Activated T-helper 2 cell treated with anti-CD3 and anti-CD28 coated beads, Interferon-gamma antibody, Interleukin-2, Interleukin-4, amounts not matched to agents 10 μg/mL and 5 μg/mL and 100 μg/mL, durations not matched to agents 14 hours and 24 hours and 36 hours (primary cell): ENCODE measurements at regions of chr2 and their contacts with region 1.

Region 1: DNA sequence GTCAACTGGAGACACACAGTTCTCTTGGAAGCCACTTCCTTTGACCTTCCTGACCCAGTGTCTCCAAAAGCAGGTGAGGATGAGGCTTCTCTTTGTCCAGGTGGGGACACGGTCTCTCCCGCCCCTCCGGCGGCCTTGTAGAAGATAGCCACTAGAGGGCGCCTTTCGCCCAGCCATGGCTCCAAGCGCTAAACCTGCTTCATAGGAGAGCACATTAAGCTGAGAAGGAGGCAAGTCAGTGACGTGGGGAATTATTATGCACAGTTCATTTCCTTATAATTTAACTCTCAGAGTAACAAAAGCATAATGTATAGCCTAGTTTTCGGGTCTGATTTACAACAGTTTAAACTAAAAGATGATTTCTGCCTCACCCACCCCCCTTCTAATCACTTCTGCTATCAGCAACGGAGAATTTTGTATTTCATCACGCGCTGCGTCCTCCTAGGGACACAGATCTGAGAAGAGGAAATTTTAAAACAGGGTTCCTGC is 208.7 kb downstream of the ICOS start:
- DNase-seq: peak; percentile 69
- H3K4me3 Mint-ChIP-seq: peak overlapping the region; percentile 76
- H3K27ac Mint-ChIP-seq: peak overlapping the region; percentile 75
- H3K4me1 Mint-ChIP-seq: peaks cover 19% of the 10 kb centered on the region
- H3K27me3 Mint-ChIP-seq: peaks cover 30% of the 10 kb centered on the region

Region 2: DNA sequence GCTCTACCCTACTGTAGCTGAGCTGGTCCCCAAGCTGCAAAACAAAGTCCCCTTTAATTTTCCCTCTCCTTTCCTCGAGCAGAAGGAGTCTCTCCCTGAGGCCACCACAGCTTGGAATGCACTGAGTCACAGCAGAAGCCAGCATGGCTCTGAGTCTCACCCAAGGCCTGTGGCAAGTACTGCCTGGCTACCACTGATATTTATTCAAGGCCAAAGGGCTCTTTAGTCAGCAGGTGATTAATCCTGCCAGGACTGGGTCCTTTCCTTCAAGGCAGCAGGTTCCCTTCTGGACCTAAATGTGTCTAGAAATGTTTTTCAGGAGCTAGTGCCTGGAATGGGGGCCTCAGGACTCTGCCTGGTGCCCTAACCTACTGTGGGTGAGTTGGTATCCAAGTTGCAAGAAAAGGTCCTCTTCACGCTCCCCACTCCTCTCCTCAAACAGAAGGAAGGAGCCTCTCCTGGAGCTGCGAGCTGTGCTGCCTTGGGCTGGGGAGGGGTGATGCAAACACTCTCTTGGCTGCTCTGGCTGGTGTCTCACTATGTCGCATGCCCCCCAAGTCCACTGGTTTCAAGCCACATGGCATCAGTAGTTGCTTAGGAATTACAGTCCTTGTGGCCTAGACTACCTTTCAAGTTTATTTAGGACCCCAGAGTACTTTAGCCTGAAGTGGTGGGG is 385.5 kb before region 1 on chr2:
- intact Hi-C with region 1: no loop called
- DNase-seq: no peak
- H3K4me3 Mint-ChIP-seq: no peak overlapping the region
- H3K27ac Mint-ChIP-seq: no peak overlapping the region
- H3K4me1 Mint-ChIP-seq: peaks cover 41% of the 10 kb centered on the region
- H3K27me3 Mint-ChIP-seq: no peaks in the 10 kb centered on the region

Region 3: DNA sequence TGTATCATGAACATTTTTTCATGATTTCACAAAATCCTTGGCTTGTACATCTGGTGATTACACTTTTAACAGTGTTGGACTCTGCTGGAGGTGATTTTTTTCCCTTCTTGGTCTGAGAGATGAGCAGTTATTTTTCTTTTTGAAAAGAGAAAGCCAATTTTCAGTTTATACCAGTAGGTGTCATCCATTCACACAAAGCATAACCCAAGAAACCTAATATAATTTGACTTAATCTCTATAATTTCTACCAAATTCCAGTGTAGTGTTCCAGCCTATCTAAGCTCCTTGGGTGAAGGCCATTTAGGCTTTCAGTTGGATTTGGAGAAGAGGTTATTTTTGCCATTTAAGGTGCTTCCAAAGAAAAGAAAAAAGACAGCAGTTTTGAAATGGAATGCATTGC is 216.5 kb before region 1 on chr2:
- intact Hi-C with region 1: no loop called
- DNase-seq: no peak
- H3K4me3 Mint-ChIP-seq: no peak overlapping the region
- H3K27ac Mint-ChIP-seq: no peak overlapping the region
- H3K4me1 Mint-ChIP-seq: peaks cover 28% of the 10 kb centered on the region
- H3K27me3 Mint-ChIP-seq: peaks cover 4% of the 10 kb centered on the region

Region 4: GRCh38 chr2:204072443-204073324 is 72.6 kb before region 1 on chr2:
- intact Hi-C with region 1: no loop called
- DNase-seq: peak; percentile 48
- H3K4me3 Mint-ChIP-seq: no peak overlapping the region
- H3K27ac Mint-ChIP-seq: no peak overlapping the region
- H3K4me1 Mint-ChIP-seq: peaks cover 11% of the 10 kb centered on the region
- H3K27me3 Mint-ChIP-seq: peaks cover 19% of the 10 kb centered on the region

Region 5: GRCh38 chr2:204260162-204260877 is 115.0 kb after region 1 on chr2:
- intact Hi-C with region 1: loop called (anchors 2 kb)
- DNase-seq: peak; percentile 14
- H3K4me3 Mint-ChIP-seq: no peak overlapping the region
- H3K27ac Mint-ChIP-seq: no peak overlapping the region
- H3K4me1 Mint-ChIP-seq: peaks cover 2% of the 10 kb centered on the region
- H3K27me3 Mint-ChIP-seq: peaks cover 53% of the 10 kb centered on the region